ENCODE measurements at regions of chr17 and their contacts with region 1.

Region 1: GRCh38 chr17:6701719-6702118 is 11.4 kb downstream of the SLC13A5 start:
- H3K4me3 ChIP-seq: no peak overlapping the region
- H3K27ac ChIP-seq: no peak overlapping the region
- H3K4me1 ChIP-seq: no peaks in the 10 kb centered on the region; the same call in 1 of the 2 replicates
- CTCF ChIP-seq: no peak

Region 2: GRCh38 chr17:6666077-6666521 is 35.6 kb before region 1 on chr17:
- CTCF ChIA-PET with region 1: interaction called, 16 read pairs
- POLR2A ChIA-PET with region 1: no interaction called
- H3K4me3 ChIP-seq: no peak overlapping the region
- H3K27ac ChIP-seq: no peak overlapping the region
- H3K4me1 ChIP-seq: no peaks in the 10 kb centered on the region
- CTCF ChIP-seq: peak; percentile 86

Region 3: GRCh38 chr17:6713130-6713917 is 11.6 kb after region 1 on chr17 and contains the start of gene SLC13A5:
- CTCF ChIA-PET with region 1: interaction called, 13 read pairs
- POLR2A ChIA-PET with region 1: no interaction called
- H3K4me3 ChIP-seq: peak within 1 kb of the TSS; percentile 22
- H3K27ac ChIP-seq: no peak within 1 kb of the TSS
- H3K4me1 ChIP-seq: no peaks in the 10 kb centered on the region
- CTCF ChIP-seq: 0 out of 2 replicates have a peak, but pooled peaks have one; percentile 15